ENCODE measurements at regions of chr15 and their contacts with region 1.

Region 1: GRCh38 chr15:43492673-43493601 is at the start of gene TP53BP1:
- DNase-seq: peak; percentile 85 to 98 (median 94)
- ATAC-seq: peak; percentile 99 to 100 (median 99)
- H3K4me3 ChIP-seq: peak within 1 kb of the TSS; percentile 80 to 95
- H3K4me3 Mint-ChIP-seq: peak within 1 kb of the TSS; percentile 88 to 96 (median 95)
- H3K27ac ChIP-seq: peak within 1 kb of the TSS; percentile 90
- H3K27ac Mint-ChIP-seq: peak within 1 kb of the TSS; percentile 84 to 94
- H3K4me1 ChIP-seq: peaks cover 7 to 11% of the 10 kb centered on the region in 2 experiments
- H3K4me1 Mint-ChIP-seq: peaks cover 21 to 38% (median 37%) of the 10 kb centered on the region in 3 donors
- H3K27me3 ChIP-seq: no peaks in the 10 kb centered on the region
- H3K27me3 Mint-ChIP-seq: no peaks in the 10 kb centered on the region
- total RNA-seq, gene TP53BP1: 26.8 to 41.8 (median 35.1) TPM

Region 2: DNA sequence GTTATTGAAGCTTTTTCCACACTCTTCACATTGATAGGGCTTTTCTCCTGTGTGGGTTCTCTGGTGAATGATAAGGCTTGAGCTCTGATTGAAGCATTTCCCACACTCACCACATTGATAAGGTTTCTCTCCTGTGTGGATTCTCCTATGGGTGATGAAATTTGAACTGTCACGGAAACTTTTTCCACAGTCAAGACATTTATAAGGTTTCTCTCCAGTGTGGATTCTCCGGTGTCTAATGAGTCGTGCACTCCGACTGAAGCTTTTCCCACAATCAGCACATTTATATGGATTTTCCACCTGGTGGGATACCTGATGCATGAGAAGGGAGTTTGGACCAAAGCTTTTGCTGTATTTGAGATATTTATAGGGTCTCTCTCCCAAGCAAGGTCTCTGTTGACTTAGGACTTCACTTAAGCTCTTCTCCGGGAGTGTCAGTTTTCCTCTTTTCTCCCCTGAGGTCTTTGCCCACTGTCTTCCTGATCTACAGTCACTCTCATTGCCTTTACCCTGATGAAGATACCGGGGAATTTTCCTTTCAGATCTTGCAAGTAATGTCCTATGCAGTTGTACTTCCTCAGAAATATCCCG is 131.5 kb before region 1 on chr15:
- CTCF ChIA-PET with region 1: no interaction called
- POLR2A ChIA-PET with region 1: no interaction called
- DNase-seq: no peak
- ATAC-seq: no peak
- H3K4me3 ChIP-seq: no peak overlapping the region
- H3K4me3 Mint-ChIP-seq: no peak overlapping the region
- H3K27ac ChIP-seq: no peak overlapping the region
- H3K27ac Mint-ChIP-seq: no peak overlapping the region
- H3K4me1 ChIP-seq: no peaks in the 10 kb centered on the region
- H3K4me1 Mint-ChIP-seq: peaks cover 0 to 11% (median 2%) of the 10 kb centered on the region in 3 donors
- H3K27me3 ChIP-seq: no peaks in the 10 kb centered on the region
- H3K27me3 Mint-ChIP-seq: no peaks in the 10 kb centered on the region

Region 3: GRCh38 chr15:43510200-43511011 is 17.5 kb after region 1 on chr15:
- CTCF ChIA-PET with region 1: interaction called in 1 of 2 experiments, 21 read pairs
- POLR2A ChIA-PET with region 1: interaction called, 7 to 16 read pairs
- DNase-seq: peak; percentile 87 to 97 (median 93)
- ATAC-seq: peak; percentile 90 to 95 (median 94)
- H3K4me3 ChIP-seq: peak overlapping the region; percentile 64 to 79
- H3K4me3 Mint-ChIP-seq: peak overlapping the region; percentile 84 to 95 (median 94)
- H3K27ac ChIP-seq: peak overlapping the region; percentile 55
- H3K27ac Mint-ChIP-seq: peak overlapping the region; percentile 92 to 96
- H3K4me1 ChIP-seq: peaks cover 12 to 28% of the 10 kb centered on the region in 2 experiments
- H3K4me1 Mint-ChIP-seq: peaks cover 35 to 50% (median 35%) of the 10 kb centered on the region in 3 donors
- H3K27me3 ChIP-seq: no peaks in the 10 kb centered on the region
- H3K27me3 Mint-ChIP-seq: peaks cover 0 to under 1% of the 10 kb centered on the region in 2 donors

Region 4: DNA sequence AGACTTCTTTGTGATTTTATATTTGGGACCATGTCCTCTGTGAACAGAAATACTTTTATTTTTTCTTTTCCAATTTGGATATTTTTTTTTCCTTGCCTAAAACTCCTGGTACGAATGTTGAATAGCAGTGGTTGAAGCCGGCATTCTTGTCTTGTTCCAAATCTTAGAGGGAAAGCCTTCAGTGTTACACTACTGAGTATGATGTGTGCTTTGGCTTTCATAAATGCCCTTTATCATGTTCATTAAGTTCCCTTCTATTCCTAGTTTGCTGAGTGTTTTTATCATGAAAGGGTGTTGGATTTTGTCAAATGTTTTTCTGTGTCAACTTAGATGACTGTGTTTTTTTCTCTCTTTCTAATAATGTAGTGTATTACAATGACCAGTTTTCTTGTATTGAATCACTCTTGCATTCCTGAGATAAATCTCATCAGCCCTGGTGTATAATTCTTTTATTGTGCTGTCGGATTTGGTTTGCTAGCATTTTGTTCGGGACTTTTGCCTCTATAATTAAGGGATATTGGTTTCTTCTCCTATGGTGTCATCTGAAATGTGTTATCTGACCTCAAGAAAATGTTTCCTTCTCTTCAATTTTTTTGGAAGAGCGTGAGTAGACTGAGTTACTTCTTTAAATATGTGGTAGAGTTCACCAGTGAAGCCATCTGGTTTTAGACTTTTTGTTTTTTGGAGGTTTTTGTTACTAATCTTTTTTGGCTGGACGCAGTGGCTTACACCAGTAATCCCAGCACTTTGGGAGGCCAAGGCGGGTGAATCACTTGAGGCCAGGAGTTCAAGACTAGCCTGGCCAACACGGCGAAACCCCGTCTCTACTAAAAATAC is 57.8 kb after region 1 on chr15:
- CTCF ChIA-PET with region 1: no interaction called
- POLR2A ChIA-PET with region 1: no interaction called
- DNase-seq: no peak
- ATAC-seq: no peak
- H3K4me3 ChIP-seq: no peak overlapping the region
- H3K4me3 Mint-ChIP-seq: no peak overlapping the region
- H3K27ac ChIP-seq: no peak overlapping the region
- H3K27ac Mint-ChIP-seq: no peak overlapping the region
- H3K4me1 ChIP-seq: no peaks in the 10 kb centered on the region
- H3K4me1 Mint-ChIP-seq: no peaks in the 10 kb centered on the region
- H3K27me3 ChIP-seq: no peaks in the 10 kb centered on the region
- H3K27me3 Mint-ChIP-seq: no peaks in the 10 kb centered on the region